ENCODE measurements at regions of chr3 and their contacts with region 1.

Region 1: DNA sequence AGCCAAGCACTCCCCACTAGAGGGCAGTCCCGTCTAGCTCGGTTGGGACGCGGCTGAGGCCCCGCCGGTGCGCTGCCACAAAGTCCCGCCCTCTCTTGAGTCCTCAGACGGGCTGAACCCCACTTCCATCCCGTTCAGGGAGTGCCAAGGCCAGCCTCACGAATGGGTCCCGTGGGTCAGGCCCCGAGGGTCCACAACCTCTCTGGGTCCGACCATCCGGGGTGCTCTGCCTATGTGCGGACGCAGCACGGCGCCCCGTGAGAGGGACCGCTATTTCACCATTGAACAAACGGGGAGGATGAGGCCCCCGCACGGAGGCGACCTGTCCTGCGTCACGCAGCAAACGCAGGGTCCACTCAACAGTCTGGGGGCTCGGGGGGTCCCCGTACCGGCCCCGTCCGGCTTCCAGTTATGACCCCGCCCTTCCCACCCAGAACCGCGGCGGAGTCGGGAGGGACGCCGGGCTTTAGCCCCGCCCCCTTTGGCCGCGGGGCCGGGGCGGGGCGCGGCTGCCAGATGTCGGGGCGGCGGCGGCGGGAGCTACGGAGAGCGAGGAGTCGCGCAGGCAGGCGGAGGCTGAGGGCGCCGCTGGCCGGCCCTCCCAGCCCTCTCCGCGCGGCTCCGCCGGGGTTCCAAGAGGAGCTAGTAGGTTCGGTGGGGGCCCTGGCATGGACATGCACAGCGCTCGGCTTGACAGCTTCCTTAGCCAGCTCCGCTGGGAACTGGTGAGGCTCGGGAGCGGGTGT is at the start of gene INKA1:
- DNase-seq: peak; percentile 86 to 88 (median 88)
- H3K4me3 ChIP-seq: peak within 1 kb of the TSS; percentile 74 to 84
- H3K4me3 Mint-ChIP-seq: peak within 1 kb of the TSS; percentile 89 to 94 (median 92)
- H3K27ac ChIP-seq: peak within 1 kb of the TSS; percentile 78
- H3K27ac Mint-ChIP-seq: peak within 1 kb of the TSS; percentile 87 to 98 (median 95)
- H3K4me1 ChIP-seq: peaks cover 32% of the 10 kb centered on the region
- H3K4me1 Mint-ChIP-seq: peaks cover 18 to 50% (median 33%) of the 10 kb centered on the region in 4 donors
- H3K27me3 ChIP-seq: no peaks in the 10 kb centered on the region
- H3K27me3 Mint-ChIP-seq: peaks cover 0 to 4% of the 10 kb centered on the region in 2 donors
- total RNA-seq, gene INKA1: 0.55 to 1.2 TPM

Region 2: GRCh38 chr3:49723628-49724551 is 79.0 kb before region 1 on chr3 and contains the start of gene GMPPB:
- CTCF ChIA-PET with region 1: interaction called, 7 read pairs
- POLR2A ChIA-PET with region 1: interaction called, 24 read pairs
- intact Hi-C with region 1: loop called (anchors 2 kb)
- DNase-seq: peak; percentile 88 to 92 (median 92)
- H3K4me3 ChIP-seq: peak within 1 kb of the TSS; percentile 85 to 89
- H3K4me3 Mint-ChIP-seq: peak within 1 kb of the TSS; percentile 93 to 98 (median 96)
- H3K27ac ChIP-seq: peak within 1 kb of the TSS; percentile 99
- H3K27ac Mint-ChIP-seq: peak within 1 kb of the TSS; percentile 98 to 99 (median 99)
- H3K4me1 ChIP-seq: peaks cover 26% of the 10 kb centered on the region
- H3K4me1 Mint-ChIP-seq: peaks cover 13 to 48% (median 24%) of the 10 kb centered on the region in 4 donors
- H3K27me3 ChIP-seq: no peaks in the 10 kb centered on the region
- H3K27me3 Mint-ChIP-seq: peaks cover 0 to 2% of the 10 kb centered on the region in 2 donors
- total RNA-seq, gene GMPPB: 59.5 to 61.3 TPM

Region 3: GRCh38 chr3:49786241-49786958 is 16.5 kb before region 1 on chr3 and contains the start of gene IP6K1:
- CTCF ChIA-PET with region 1: interaction called, 20 read pairs
- POLR2A ChIA-PET with region 1: interaction called, 46 read pairs
- intact Hi-C with region 1: loop called (anchors 1 kb)
- DNase-seq: peak; percentile 98 to 100 (median 99)
- H3K4me3 ChIP-seq: peak within 1 kb of the TSS; percentile 79 to 89
- H3K4me3 Mint-ChIP-seq: peak within 1 kb of the TSS; percentile 92 to 98 (median 92)
- H3K27ac ChIP-seq: peak within 1 kb of the TSS; percentile 89
- H3K27ac Mint-ChIP-seq: peak within 1 kb of the TSS; percentile 98 to 99 (median 99)
- H3K4me1 ChIP-seq: peaks cover 30% of the 10 kb centered on the region
- H3K4me1 Mint-ChIP-seq: peaks cover 18 to 47% (median 31%) of the 10 kb centered on the region in 4 donors
- H3K27me3 ChIP-seq: no peaks in the 10 kb centered on the region
- H3K27me3 Mint-ChIP-seq: peaks cover 0 to 2% of the 10 kb centered on the region in 2 donors
- total RNA-seq, gene IP6K1: 50.1 to 60.0 TPM

Region 4: DNA sequence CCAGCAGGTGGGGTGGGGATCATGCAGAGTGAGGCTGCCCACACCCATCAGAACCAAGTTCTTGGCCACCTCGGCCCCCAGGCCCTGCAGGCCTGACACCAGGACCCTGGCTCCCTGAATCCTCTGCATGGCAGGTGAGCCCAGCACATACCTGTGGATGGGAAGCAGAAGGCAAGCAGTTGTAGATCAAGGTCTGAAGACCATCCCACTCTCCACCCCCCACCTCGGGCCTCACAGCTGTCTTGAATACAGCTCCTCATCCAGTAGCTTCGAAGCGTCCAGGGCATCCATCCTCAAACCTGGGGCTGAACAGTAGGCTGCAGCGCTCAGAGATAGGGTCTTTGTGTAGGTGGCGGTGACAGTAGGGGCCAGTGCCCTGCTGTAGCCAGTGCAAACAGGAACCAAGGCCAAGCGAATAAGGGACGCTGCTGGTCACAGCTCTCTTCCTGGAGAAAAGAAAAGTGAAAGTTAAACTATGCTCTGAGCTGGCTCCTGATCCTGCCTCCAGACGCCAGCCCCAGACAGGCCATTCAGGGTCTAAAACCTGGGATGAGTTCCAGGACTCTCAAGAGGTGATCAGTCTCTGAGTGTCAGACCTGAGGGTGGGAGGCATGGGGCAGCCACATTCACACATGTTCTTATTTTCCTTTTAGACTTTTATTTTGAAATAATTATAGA is 10.7 kb after region 1 on chr3 and contains the start of gene UBA7:
- CTCF ChIA-PET with region 1: interaction called, 26 read pairs
- POLR2A ChIA-PET with region 1: interaction called, 87 read pairs
- intact Hi-C with region 1: loop called (anchors 1 kb)
- DNase-seq: peak in 4 of 5 donors; percentile 43 to 56 (median 49)
- H3K4me3 ChIP-seq: peak within 1 kb of the TSS; percentile 60 to 82
- H3K4me3 Mint-ChIP-seq: peak within 1 kb of the TSS; percentile 94 to 99 (median 97)
- H3K27ac ChIP-seq: peak within 1 kb of the TSS; percentile 79
- H3K27ac Mint-ChIP-seq: peak within 1 kb of the TSS; percentile 93 to 98 (median 96)
- H3K4me1 ChIP-seq: peaks cover 30% of the 10 kb centered on the region
- H3K4me1 Mint-ChIP-seq: peaks cover 14 to 44% (median 27%) of the 10 kb centered on the region in 4 donors
- H3K27me3 ChIP-seq: no peaks in the 10 kb centered on the region
- H3K27me3 Mint-ChIP-seq: no peaks in the 10 kb centered on the region
- total RNA-seq, gene UBA7: 269 to 299 TPM

Region 5: GRCh38 chr3:49906004-49906743 is 103.3 kb after region 1 on chr3:
- CTCF ChIA-PET with region 1: interaction called, 19 read pairs
- POLR2A ChIA-PET with region 1: interaction called, 3 read pairs
- intact Hi-C with region 1: loop called (anchors 1 kb)
- DNase-seq: peak; percentile 39 to 64 (median 41)
- H3K4me3 ChIP-seq: peak overlapping the region in 1 of 2 donors; percentile 4
- H3K4me3 Mint-ChIP-seq: peak overlapping the region; percentile 48 to 82 (median 62)
- H3K27ac ChIP-seq: peak overlapping the region; percentile 40
- H3K27ac Mint-ChIP-seq: peak overlapping the region; percentile 77 to 92 (median 87)
- H3K4me1 ChIP-seq: peaks cover 35% of the 10 kb centered on the region
- H3K4me1 Mint-ChIP-seq: peaks cover 15 to 36% (median 25%) of the 10 kb centered on the region in 4 donors
- H3K27me3 ChIP-seq: no peaks in the 10 kb centered on the region
- H3K27me3 Mint-ChIP-seq: no peaks in the 10 kb centered on the region

Region 6: GRCh38 chr3:50088725-50089608 is 286.1 kb after region 1 on chr3 and contains the start of gene RBM5:
- CTCF ChIA-PET with region 1: no interaction called
- POLR2A ChIA-PET with region 1: interaction called, 5 read pairs
- intact Hi-C with region 1: loop called (anchors 2 kb)
- DNase-seq: peak; percentile 88 to 95 (median 89)
- H3K4me3 ChIP-seq: peak within 1 kb of the TSS; percentile 93 to 100
- H3K4me3 Mint-ChIP-seq: peak within 1 kb of the TSS; percentile 96 to 99 (median 98)
- H3K27ac ChIP-seq: peak within 1 kb of the TSS; percentile 97
- H3K27ac Mint-ChIP-seq: peak within 1 kb of the TSS; percentile 91 to 99 (median 98)
- H3K4me1 ChIP-seq: peaks cover 23% of the 10 kb centered on the region
- H3K4me1 Mint-ChIP-seq: peaks cover 20 to 42% (median 30%) of the 10 kb centered on the region in 4 donors
- H3K27me3 ChIP-seq: no peaks in the 10 kb centered on the region
- H3K27me3 Mint-ChIP-seq: no peaks in the 10 kb centered on the region
- total RNA-seq, gene RBM5: 377 to 385 TPM

Measured in CD4-positive, alpha-beta memory T cell (primary cell).